Calu3 (cell line): ENCODE measurements at regions of chr1 and their contacts with region 1.

Region 1: DNA sequence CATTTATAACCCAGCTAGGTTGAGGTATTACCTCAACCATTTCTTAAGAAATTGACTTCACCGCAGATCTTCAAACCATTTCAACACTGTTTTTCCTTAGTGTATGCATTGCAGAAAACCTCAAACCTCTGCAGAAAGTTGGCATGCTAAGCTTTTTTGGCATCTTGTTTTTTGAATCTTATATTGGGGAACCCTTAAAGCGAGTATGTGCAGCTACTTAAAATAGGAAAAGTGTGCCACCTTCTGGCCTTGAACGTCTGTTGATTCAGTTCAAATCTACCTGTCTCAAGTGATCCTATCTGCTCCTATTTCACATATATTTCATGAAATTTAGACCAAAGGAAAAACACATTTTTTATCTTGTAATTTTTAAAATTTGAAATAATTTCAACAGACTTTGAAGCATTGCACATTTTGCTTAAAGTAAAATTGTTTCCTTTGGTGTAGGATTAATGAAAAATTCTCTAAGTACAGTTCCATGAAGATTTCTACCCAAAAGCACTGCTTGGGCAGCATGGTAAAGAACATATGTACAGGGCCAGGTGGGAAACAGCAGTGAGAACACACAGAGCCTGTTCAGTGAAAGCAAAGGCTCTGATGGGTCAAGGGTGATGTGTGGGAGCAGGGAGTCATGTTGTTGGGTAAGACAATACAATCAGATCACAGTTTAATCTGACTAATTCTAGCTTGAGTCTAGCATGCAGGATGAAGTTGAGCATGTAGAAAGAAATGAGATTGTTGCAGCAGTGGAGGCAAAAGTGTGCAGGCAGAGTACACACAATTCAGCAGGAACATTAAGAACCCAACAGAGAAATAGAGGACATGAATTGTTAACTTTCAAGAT is 17.2 kb downstream of the HENMT1 start:
- DNase-seq: peak; percentile 23
- H3K4me3 Mint-ChIP-seq: no peak overlapping the region
- H3K27ac Mint-ChIP-seq: no peak overlapping the region
- H3K4me1 Mint-ChIP-seq: peaks cover 26% of the 10 kb centered on the region
- H3K27me3 Mint-ChIP-seq: no peaks in the 10 kb centered on the region
- CTCF ChIP-seq: peak; percentile 38

Region 2: GRCh38 chr1:108512239-108512981 is 131.3 kb before region 1 on chr1:
- CTCF ChIA-PET with region 1: interaction called, 11 read pairs
- intact Hi-C with region 1: loop called (anchors 1 kb)
- DNase-seq: no peak
- H3K4me3 Mint-ChIP-seq: no peak overlapping the region
- H3K27ac Mint-ChIP-seq: no peak overlapping the region
- H3K4me1 Mint-ChIP-seq: no peaks in the 10 kb centered on the region
- H3K27me3 Mint-ChIP-seq: no peaks in the 10 kb centered on the region
- CTCF ChIP-seq: peak; percentile 42

Region 3: GRCh38 chr1:108559215-108560186 is 84.2 kb before region 1 on chr1 and contains the start of gene EEIG2:
- CTCF ChIA-PET with region 1: interaction called, 7 read pairs
- intact Hi-C with region 1: loop called (anchors 2 kb)
- DNase-seq: peak; percentile 87
- H3K4me3 Mint-ChIP-seq: peak within 1 kb of the TSS; percentile 78
- H3K27ac Mint-ChIP-seq: peak within 1 kb of the TSS; percentile 68
- H3K4me1 Mint-ChIP-seq: no peaks in the 10 kb centered on the region
- H3K27me3 Mint-ChIP-seq: no peaks in the 10 kb centered on the region
- CTCF ChIP-seq: peak; percentile 63
- total RNA-seq, gene EEIG2: 7.9 and 13.6 TPM in 2 replicates

Region 4: DNA sequence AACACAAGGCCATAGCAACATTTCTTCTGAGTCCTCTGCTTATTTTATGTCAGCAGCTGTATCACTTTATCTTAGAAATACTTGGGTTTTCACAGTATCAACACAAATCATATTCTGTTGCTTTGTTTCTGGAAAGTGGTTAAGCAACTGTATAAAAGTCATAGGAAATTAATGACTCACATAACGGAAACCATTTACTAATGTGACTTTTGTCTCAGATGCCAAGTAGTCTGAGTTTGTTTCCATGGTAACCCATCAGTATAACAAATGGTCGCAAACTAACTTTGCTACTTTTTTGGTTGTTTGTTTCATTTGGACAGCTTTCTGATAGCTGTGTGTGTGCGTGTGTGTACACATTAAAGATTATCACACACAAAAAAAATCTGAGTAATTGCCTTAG is 52.8 kb before region 1 on chr1:
- CTCF ChIA-PET with region 1: no interaction called
- intact Hi-C with region 1: loop called (anchors 10 kb)
- DNase-seq: no peak
- H3K4me3 Mint-ChIP-seq: no peak overlapping the region
- H3K27ac Mint-ChIP-seq: peak overlapping the region; percentile 69
- H3K4me1 Mint-ChIP-seq: peaks cover 51% of the 10 kb centered on the region
- H3K27me3 Mint-ChIP-seq: no peaks in the 10 kb centered on the region
- CTCF ChIP-seq: no peak

Region 5: DNA sequence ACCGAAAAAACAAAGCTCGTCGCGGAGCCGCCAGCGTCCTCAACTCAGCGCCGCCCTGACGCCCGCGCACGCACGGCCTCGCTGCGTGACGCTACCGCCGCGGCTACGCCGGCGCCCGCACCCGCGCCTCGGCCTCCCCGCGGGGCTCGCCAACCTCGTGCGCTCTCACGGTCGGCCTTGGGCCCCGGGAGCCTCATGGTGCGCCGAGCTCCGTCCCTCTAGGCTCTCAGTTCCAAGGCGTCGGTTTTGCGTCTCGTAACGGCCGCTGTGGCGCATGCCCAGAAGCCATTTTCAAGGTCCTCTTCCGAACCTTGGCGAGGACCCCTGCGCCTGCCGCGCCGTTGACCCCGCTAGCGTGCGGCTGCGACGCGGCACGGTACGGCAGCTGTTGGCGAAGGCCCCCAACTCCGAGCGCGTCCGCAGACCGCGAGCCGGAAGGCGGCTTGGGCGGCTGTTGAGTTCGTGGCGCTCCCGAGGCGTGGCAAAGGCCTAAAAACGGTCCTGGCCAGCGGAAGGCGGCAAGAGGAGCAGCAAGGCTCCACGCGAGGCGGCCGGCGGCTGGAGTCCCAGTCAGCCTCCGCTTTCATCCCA is 17.4 kb after region 1 on chr1 and contains the start of gene HENMT1:
- CTCF ChIA-PET with region 1: no interaction called
- intact Hi-C with region 1: no loop called
- DNase-seq: peak; percentile 45
- H3K4me3 Mint-ChIP-seq: peak within 1 kb of the TSS; percentile 74
- H3K27ac Mint-ChIP-seq: peak within 1 kb of the TSS; percentile 61
- H3K4me1 Mint-ChIP-seq: no peaks in the 10 kb centered on the region
- H3K27me3 Mint-ChIP-seq: no peaks in the 10 kb centered on the region
- CTCF ChIP-seq: no peak
- total RNA-seq, gene HENMT1: 9.9 and 10.6 TPM in 2 replicates